Activated CD4-positive, alpha-beta memory T cell treated with anti-CD3 and anti-CD28 coated beads for 36 hours (primary cell): ENCODE measurements at regions of chr2 and their contacts with region 1.

Region 1: GRCh38 chr2:15939854-15940660 is at the start of gene MYCN:
- DNase-seq: peak; percentile 61
- H3K4me3 Mint-ChIP-seq: peak within 1 kb of the TSS; percentile 33
- H3K27ac Mint-ChIP-seq: no peak within 1 kb of the TSS
- H3K4me1 Mint-ChIP-seq: peaks cover 20% of the 10 kb centered on the region
- H3K27me3 Mint-ChIP-seq: peaks cover 41% of the 10 kb centered on the region
- total RNA-seq, gene MYCN: 0.17 to 0.38 TPM

Region 2: GRCh38 chr2:15965564-15966019 is 25.5 kb after region 1 on chr2:
- CTCF ChIA-PET with region 1: interaction called, 12 read pairs
- POLR2A ChIA-PET with region 1: no interaction called
- intact Hi-C with region 1: loop called (anchors 2 kb)
- DNase-seq: peak; percentile 79
- H3K4me3 Mint-ChIP-seq: no peak overlapping the region
- H3K27ac Mint-ChIP-seq: peak overlapping the region; percentile 49
- H3K4me1 Mint-ChIP-seq: peaks cover 49% of the 10 kb centered on the region
- H3K27me3 Mint-ChIP-seq: peaks cover 2% of the 10 kb centered on the region

Region 3: GRCh38 chr2:16034151-16034973 is 94.3 kb after region 1 on chr2:
- CTCF ChIA-PET with region 1: no interaction called
- POLR2A ChIA-PET with region 1: no interaction called
- intact Hi-C with region 1: no loop called
- DNase-seq: no peak
- H3K4me3 Mint-ChIP-seq: no peak overlapping the region
- H3K27ac Mint-ChIP-seq: no peak overlapping the region
- H3K4me1 Mint-ChIP-seq: no peaks in the 10 kb centered on the region
- H3K27me3 Mint-ChIP-seq: no peaks in the 10 kb centered on the region

Region 4: DNA sequence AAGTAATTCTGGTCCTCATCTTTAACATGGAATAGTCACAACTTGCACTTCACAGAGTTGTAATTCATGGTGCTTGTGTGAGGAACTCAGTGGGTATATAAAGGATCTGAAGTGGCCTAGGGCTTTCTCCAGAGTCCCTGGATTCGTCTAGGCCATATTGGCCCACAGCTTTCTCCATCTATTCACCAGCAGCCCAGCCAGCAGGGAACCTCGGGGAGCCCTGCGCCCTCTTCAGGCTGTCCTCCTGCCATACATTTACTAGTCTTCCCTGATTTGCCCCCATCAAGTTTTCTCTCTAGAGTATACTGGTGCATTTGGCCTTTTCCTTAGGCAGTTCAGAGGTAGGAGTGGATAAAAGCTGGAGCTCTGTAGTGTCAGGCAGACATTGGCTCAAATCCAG is 278.6 kb after region 1 on chr2:
- CTCF ChIA-PET with region 1: interaction called, 5 read pairs
- POLR2A ChIA-PET with region 1: no interaction called
- intact Hi-C with region 1: loop called (anchors 5 kb)
- DNase-seq: peak; percentile 11
- H3K4me3 Mint-ChIP-seq: no peak overlapping the region
- H3K27ac Mint-ChIP-seq: no peak overlapping the region
- H3K4me1 Mint-ChIP-seq: no peaks in the 10 kb centered on the region
- H3K27me3 Mint-ChIP-seq: no peaks in the 10 kb centered on the region

Region 5: DNA sequence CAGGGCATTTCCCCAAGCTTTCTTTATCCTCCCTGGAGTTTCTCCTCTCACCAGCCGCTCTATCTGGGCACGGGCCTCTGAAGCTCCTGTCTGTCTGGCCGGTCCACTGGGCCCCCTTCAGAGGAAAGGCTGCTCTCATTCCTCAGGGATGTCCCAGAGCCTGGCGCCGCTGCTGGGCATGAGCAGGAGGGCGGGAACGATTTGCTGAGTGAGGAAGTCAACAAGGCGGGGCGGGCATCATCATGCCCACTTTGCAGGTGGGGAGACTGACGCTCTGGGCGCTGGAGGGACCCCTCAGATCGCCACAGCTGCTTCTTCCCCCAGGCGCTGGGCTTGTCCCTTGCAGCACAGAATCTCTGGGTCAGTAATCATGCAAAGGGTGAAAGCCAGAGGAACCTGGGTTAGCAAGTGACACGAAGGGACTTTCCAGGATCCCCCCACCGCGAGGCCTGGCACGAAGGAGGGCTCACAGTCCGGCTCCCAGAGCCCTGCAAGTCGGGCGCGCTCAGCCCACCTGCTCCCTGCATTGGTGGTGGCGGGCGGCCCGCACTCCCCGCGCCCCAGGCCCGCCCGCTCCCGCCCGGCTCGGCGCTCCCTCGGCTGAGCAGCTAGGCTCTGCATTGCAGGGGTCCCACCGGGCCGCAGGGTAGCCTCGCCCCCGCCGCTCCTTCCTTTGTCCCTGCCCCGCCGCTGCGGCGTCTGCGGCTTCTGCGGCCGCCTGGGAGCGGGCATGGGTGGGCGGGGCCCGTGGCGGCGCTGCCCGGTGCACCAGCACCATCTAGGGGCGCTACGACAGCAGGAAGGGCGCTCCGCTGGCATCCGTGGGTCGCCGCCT is 567.8 kb after region 1 on chr2:
- CTCF ChIA-PET with region 1: interaction called, 3 read pairs
- POLR2A ChIA-PET with region 1: no interaction called
- intact Hi-C with region 1: loop called (anchors 5 kb)
- DNase-seq: peak; percentile 17
- H3K4me3 Mint-ChIP-seq: no peak overlapping the region
- H3K27ac Mint-ChIP-seq: no peak overlapping the region
- H3K4me1 Mint-ChIP-seq: no peaks in the 10 kb centered on the region
- H3K27me3 Mint-ChIP-seq: peaks cover 27% of the 10 kb centered on the region